AG04450 (cell line): ENCODE measurements at regions of chr19 and their contacts with region 1.

Region 1: DNA sequence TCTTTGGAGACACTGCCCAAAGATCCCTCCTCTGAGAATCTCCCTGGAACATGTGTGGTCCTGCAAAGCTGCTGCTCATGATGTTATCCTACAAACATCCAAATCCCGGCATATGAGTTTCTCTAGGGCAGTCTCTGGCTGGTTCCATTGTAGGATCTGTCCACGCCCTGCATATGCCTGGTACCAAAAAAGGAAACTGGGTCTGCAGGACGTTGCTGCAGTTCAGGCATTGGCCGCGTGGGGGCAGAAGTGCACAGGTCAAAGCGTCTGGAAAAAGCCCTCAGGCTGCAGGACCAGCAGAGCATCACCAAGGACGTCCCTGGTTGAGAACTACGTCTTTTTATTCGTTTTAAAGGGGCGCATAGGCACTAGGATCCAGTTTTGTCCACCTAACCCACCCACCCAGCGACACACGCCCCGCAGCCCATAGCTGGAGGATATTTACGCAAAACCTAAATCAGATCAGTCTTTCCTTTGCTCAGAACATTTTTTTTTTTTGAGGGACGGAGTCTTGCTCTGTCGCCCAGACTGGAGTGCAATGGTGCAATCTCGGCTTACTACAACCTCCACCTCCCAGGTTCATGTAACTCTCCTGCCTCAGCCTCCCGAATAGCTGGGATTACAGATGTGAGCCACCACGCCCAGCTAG is 12.9 kb upstream of the ZNF564 start:
- DNase-seq: peak; percentile 81
- H3K4me3 ChIP-seq: no peak overlapping the region
- H3K27ac ChIP-seq: no peak overlapping the region
- H3K27me3 ChIP-seq: no peaks in the 10 kb centered on the region
- CTCF ChIP-seq: peak; percentile 98

Region 2: GRCh38 chr19:12440541-12441316 is 123.4 kb before region 1 on chr19 and contains the start of gene ZNF443:
- CTCF ChIA-PET with region 1: no interaction called
- POLR2A ChIA-PET with region 1: no interaction called
- DNase-seq: peak; percentile 91
- H3K4me3 ChIP-seq: peak within 1 kb of the TSS; percentile 82
- H3K27ac ChIP-seq: no peak within 1 kb of the TSS
- H3K27me3 ChIP-seq: no peaks in the 10 kb centered on the region
- CTCF ChIP-seq: 0 out of 2 replicates have a peak, but pooled peaks have one; percentile 9
- polyA plus RNA-seq, gene ZNF443: 1.1 and 1.7 TPM in 2 replicates

Region 3: GRCh38 chr19:12545267-12545666 is 18.9 kb before region 1 on chr19:
- CTCF ChIA-PET with region 1: no interaction called
- POLR2A ChIA-PET with region 1: no interaction called
- DNase-seq: no peak
- H3K4me3 ChIP-seq: no peak overlapping the region
- H3K27ac ChIP-seq: no peak overlapping the region
- H3K27me3 ChIP-seq: no peaks in the 10 kb centered on the region
- CTCF ChIP-seq: no peak

Region 4: GRCh38 chr19:12670159-12670928 is 106.2 kb after region 1 on chr19:
- CTCF ChIA-PET with region 1: interaction called, 28 read pairs
- POLR2A ChIA-PET with region 1: no interaction called
- DNase-seq: no peak
- H3K4me3 ChIP-seq: peak overlapping the region; percentile 94
- H3K27ac ChIP-seq: peak overlapping the region; percentile 98
- H3K27me3 ChIP-seq: no peaks in the 10 kb centered on the region
- CTCF ChIP-seq: no peak

Region 5: DNA sequence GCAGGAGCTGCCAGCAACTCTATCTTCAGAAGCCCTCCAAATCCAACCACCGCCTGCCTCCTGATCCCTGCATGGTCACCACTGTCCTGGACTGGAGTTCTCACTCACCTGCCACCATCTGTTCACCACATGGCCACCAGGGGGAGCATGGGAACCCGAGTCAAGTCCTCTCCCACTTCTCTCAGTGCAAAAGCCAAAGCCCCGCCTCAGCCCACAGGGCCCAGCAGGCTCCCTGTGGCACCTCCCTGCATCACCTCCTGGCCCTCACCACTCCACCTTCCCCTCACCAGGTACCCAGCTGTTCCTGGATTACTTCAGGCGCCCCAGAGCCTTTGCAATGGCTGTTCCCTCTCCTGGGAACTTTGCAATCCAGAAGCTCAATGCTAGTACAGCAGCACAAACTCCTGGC is 112.2 kb after region 1 on chr19:
- CTCF ChIA-PET with region 1: interaction called, 28 read pairs
- POLR2A ChIA-PET with region 1: no interaction called
- DNase-seq: peak; percentile 27
- H3K4me3 ChIP-seq: no peak overlapping the region
- H3K27ac ChIP-seq: no peak overlapping the region
- H3K27me3 ChIP-seq: no peaks in the 10 kb centered on the region
- CTCF ChIP-seq: peak; percentile 83